AG04449 (cell line): ENCODE measurements at regions of chr3 and their contacts with region 1.

Region 1: GRCh38 chr3:138923531-138923994 is 23.4 kb downstream of the FOXL2 start:
- DNase-seq: no peak
- H3K4me3 ChIP-seq: no peak overlapping the region
- CTCF ChIP-seq: peak; percentile 85

Region 2: GRCh38 chr3:138479438-138479863 is 444.1 kb before region 1 on chr3:
- CTCF ChIA-PET with region 1: interaction called, 89 read pairs
- POLR2A ChIA-PET with region 1: no interaction called
- DNase-seq: no peak
- H3K4me3 ChIP-seq: no peak overlapping the region
- CTCF ChIP-seq: peak; percentile 90

Region 3: GRCh38 chr3:138694287-138695007 is 229.1 kb before region 1 on chr3:
- CTCF ChIA-PET with region 1: interaction called, 684 read pairs
- POLR2A ChIA-PET with region 1: interaction called, 8 read pairs
- DNase-seq: peak; percentile 95
- H3K4me3 ChIP-seq: no peak overlapping the region
- CTCF ChIP-seq: no peak

Region 4: DNA sequence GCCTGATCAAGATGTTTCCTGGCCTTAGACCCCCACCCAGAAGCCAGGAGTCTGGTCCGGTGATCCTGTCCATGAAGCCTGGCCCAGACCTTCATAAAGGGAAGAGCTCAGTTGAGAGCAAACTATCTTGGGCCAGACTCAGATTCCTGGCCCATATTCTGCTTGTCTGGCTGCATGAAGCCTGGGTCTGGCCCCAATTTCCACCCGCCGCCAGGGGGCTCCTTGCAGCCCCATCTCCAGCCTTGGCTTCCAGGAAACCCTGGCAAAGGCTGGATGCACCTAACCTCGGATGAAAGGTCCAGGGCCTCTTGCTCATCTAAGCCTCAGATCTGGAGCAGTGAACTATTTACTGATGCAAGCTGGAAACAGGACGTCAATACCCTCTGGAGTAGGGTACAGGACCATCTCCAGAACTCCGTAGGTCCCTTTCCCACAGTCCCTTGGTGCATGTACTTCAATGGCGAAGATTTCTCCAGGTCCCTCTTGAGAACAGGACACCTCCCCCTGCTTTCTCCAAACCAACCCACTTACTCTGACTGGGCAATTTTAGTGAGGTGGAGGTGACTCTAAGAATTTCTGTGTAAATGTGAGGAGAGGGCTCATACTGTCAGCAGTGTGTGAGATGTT is 17.8 kb after region 1 on chr3:
- CTCF ChIA-PET with region 1: interaction called, 355 read pairs
- POLR2A ChIA-PET with region 1: no interaction called
- DNase-seq: no peak
- H3K4me3 ChIP-seq: no peak overlapping the region
- CTCF ChIP-seq: peak; percentile 60

Region 5: DNA sequence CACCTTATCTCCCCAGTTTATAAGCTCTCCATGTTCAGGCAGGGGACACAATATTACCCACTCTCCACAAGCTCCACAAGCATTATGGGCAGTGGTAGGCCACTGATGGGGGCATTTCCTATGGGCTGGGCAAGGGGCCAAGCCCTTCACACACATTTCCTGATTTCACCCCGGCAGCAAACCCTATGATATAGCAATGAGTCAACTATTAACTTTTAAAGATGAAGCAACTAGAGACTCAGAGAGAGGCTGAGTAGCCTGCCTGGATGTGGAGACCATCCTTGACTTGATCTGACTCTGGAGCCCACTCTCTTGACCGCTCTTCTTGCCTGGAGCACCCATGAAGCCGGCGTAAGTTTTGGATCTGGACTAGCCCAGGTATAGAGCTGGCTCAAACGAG is 50.9 kb after region 1 on chr3:
- CTCF ChIA-PET with region 1: interaction called, 14 read pairs
- POLR2A ChIA-PET with region 1: no interaction called
- DNase-seq: no peak
- H3K4me3 ChIP-seq: no peak overlapping the region
- CTCF ChIP-seq: no peak